ENCODE measurements at regions of chr1 and their contacts with region 1.

Region 1: DNA sequence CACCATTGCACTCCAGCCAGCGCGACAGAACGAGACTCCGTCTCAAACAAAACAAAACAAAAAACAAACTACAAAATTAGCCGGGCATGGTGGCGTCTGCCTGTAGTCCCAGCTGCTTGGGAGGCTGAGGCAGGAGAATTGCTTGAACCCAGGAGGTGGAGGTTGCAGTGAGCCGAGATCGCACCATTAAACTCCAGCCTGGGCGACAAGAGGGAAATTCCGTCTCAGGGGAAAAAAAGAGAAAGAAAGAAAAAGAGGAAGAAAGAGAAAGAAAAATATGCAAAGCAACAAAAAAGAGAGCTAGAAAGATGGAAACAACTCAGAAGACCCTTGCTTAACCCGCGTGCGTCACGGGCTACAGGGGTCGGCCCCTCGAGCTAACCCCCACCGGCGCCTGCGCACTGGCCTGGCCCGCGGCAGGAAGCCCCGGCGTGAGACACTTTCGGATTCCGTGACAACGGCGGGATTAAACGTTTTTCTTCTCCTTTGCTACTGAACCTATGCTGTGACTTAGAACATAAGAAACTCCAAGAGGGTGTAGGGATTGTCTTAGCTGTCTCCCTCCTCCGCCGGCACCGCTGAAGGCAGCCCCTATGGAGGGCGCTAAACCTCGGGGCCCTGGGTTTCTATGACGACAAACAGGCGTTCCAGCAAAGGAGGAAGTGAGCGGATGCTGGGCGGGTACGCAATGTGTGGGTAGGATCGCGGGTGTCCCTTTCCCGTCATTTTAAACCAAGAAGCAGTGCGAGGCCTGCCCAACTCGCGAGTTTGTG is at the start of gene AXDND1:
- DNase-seq: peak; percentile 84 to 91
- ATAC-seq: peak; percentile 88 to 95 (median 92)
- H3K4me3 ChIP-seq: peak within 1 kb of the TSS; percentile 73
- H3K27ac ChIP-seq: peak within 1 kb of the TSS; percentile 72
- H3K4me1 ChIP-seq: no peaks in the 10 kb centered on the region
- H3K27me3 ChIP-seq: no peaks in the 10 kb centered on the region
- CTCF ChIP-seq: peak; percentile 24
- total RNA-seq, gene AXDND1: not detected

Region 2: DNA sequence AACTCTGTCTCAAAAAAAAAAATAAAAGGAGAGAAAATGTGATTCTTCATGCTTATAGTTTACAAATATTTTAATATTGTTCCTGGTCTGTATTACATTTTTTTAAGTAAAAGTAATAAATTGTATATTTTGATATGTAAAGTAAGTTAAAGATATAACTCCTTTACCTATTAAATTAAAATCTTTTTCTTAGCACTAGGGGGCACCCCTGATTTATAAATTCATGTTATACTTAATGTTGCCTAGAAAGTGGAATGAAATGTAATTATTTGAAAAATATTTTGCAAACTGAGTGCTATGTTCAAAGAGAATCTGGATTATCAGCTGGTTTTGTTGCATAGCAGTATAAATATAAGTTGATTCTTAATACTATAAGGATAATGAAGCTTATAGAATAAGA is 591.2 kb before region 1 on chr1:
- intact Hi-C with region 1: loop called in 1 of 2 experiments (anchors 10 kb)
- DNase-seq: no peak
- ATAC-seq: peak in 1 of 4 donors; percentile 60
- H3K4me3 ChIP-seq: no peak overlapping the region
- H3K27ac ChIP-seq: no peak overlapping the region
- H3K4me1 ChIP-seq: no peaks in the 10 kb centered on the region
- H3K27me3 ChIP-seq: no peaks in the 10 kb centered on the region
- CTCF ChIP-seq: peak; percentile 63

Region 3: GRCh38 chr1:179251675-179252074 is 113.8 kb before region 1 on chr1:
- intact Hi-C with region 1: loop called (anchors 5 kb)
- DNase-seq: no peak
- ATAC-seq: peak in 2 of 4 donors; percentile 59 to 70
- H3K4me3 ChIP-seq: no peak overlapping the region
- H3K27ac ChIP-seq: no peak overlapping the region
- H3K4me1 ChIP-seq: no peaks in the 10 kb centered on the region
- H3K27me3 ChIP-seq: no peaks in the 10 kb centered on the region
- CTCF ChIP-seq: peak; percentile 27

Region 4: DNA sequence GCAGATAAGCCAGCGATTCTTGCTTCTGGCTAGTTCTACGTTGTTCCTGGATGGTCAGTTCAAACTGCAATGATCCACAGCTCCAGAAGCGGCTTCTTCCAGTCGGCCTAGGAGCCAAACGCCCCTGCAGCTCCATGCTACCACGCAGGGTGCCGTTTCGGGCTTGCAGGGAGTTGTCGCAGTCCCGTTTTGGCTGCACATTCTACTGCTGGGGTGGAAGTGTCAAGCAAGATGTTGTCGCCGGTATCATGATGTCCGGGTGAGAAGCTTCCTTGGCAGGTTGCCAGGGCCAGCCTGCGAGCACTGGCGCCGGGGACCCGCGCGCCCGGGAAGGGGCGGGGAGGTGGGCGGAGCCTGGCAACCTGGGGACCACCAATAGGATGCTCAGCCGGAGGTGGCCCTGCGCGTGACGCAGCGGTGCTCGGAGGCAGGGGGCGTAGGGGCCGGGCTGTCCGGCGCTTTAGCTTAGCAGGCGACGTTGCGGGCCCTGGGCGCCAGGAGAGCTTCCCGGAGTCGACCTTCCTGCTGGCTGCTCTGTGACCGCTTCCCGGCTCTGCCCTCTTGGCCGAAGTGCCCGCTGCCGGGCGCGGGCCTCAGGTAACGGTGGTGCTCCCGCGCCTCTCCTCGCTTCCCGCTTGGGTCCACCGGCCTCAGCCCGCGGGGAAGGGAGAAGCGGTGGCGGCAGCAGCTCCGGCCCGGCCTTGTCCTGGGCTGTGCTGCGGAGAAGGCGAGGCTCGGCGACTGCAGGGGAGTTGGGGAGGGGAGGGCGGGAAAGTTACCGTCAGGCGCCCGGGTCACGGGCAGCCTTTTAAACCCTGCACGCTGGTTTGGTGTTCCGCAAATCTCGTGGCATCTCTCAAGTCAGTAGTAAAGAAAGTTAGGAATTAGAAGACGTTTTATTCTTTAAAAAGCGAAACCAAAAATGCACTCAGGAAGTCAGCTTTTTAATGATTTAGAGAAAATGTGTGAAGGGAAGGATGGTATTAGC is 71.9 kb before region 1 on chr1 and contains the start of gene SOAT1:
- intact Hi-C with region 1: loop called in 1 of 2 experiments (anchors 5 kb)
- DNase-seq: peak; percentile 97 to 98
- ATAC-seq: peak; percentile 98 to 99 (median 99)
- H3K4me3 ChIP-seq: peak within 1 kb of the TSS; percentile 87
- H3K27ac ChIP-seq: peak within 1 kb of the TSS; percentile 82
- H3K4me1 ChIP-seq: peaks cover 9% of the 10 kb centered on the region
- H3K27me3 ChIP-seq: no peaks in the 10 kb centered on the region
- CTCF ChIP-seq: no peak
- total RNA-seq, gene SOAT1: 7.6 to 21.0 (median 11.1) TPM

Region 5: DNA sequence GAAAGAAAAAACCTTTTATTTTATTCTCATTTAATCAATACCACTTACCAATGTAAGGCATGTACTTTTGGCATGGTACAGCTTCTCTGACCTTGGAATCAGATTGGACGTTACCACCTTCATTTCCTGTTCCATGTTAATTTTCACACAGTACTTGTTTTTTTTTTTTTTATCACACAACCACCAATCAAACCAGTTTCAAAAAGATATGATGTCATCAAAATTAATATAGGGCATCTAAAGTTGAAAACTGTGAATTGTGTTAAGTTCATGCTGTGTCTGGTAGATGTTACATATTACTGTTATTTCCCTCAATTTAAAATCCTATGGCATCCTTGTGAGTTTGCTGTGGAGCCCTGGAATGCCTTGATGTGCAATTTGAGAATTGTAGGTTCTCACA is 125.1 kb after region 1 on chr1:
- intact Hi-C with region 1: no loop called
- DNase-seq: no peak
- ATAC-seq: no peak
- H3K4me3 ChIP-seq: no peak overlapping the region
- H3K27ac ChIP-seq: no peak overlapping the region
- H3K4me1 ChIP-seq: no peaks in the 10 kb centered on the region
- H3K27me3 ChIP-seq: no peaks in the 10 kb centered on the region
- CTCF ChIP-seq: no peak